T-cell (primary cell): ENCODE measurements at regions of chr10 and their contacts with region 1.

Region 1: DNA sequence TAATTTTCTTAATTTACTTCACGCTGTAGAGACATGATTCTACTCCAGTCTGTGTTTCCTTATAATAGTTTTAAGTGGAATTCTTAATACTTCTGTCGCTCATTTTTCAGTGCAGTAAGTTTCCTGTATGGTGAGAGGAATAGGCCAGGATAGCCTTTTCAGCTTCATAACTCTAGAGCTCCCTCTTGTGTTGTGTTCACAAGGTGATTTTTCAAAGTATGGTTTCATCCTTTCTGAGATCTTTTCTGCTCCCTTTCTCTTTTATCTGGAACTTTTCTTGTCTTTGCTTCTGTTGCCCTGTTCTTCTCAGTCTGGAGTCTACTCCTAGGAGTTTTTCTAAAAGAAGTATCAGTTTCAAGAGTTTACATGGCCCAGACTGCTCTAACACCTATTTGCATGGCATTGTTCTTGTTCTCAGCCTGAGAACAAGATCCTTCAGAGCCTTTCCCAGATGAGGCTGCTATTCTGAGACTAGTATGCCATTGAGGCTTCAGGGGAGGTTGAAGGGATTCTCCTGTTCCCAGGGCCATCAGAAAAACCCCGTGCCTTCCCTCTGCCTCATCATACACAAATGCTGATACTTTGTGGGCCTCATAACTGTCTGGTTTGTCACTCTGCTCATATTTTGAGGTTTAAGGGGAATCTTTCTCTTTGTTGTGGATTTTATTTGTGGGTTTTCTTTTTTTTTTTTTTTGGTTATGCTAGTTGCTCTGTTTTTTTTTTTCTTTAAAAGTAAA is 21.8 kb downstream of the NET1 start:
- DNase-seq: peak in 3 of 35 experiments; percentile 1 to 62 (median 11)
- ATAC-seq: peak; percentile 61 to 77 (median 68)
- H3K4me3 ChIP-seq: no peak overlapping the region
- H3K4me3 Mint-ChIP-seq: peak overlapping the region in 1 of 3 donors; percentile 40
- H3K27ac ChIP-seq: no peak overlapping the region
- H3K27ac Mint-ChIP-seq: no peak overlapping the region
- H3K4me1 ChIP-seq: peaks cover 3 to 7% of the 10 kb centered on the region in 2 experiments
- H3K4me1 Mint-ChIP-seq: peaks cover 8 to 12% (median 9%) of the 10 kb centered on the region in 3 donors
- H3K27me3 ChIP-seq: no peaks in the 10 kb centered on the region
- H3K27me3 Mint-ChIP-seq: no peaks in the 10 kb centered on the region

Region 2: DNA sequence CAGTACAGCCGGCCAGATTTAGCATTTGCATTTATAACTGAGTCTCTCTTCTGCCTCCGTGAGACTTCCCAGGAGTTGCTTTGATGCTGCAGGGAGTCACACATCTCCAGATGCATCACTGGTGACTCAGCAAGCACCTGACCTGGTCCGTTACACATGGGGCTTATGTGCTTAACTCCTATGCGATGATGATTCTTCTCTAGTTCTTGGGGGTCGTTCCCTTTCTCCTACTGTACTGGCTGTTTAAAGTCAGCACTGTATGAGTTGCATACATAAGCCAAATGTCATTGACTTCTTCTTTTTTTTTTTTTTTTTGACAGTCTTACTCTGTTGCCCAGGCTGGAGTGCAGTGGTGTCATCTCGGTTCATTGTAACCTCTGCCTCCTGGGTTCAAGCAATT is 621.2 kb before region 1 on chr10:
- CTCF ChIA-PET with region 1: interaction called, 3 to 13 read pairs
- POLR2A ChIA-PET with region 1: no interaction called
- DNase-seq: no peak
- ATAC-seq: no peak
- H3K4me3 ChIP-seq: no peak overlapping the region
- H3K4me3 Mint-ChIP-seq: no peak overlapping the region
- H3K27ac ChIP-seq: no peak overlapping the region
- H3K27ac Mint-ChIP-seq: no peak overlapping the region
- H3K4me1 ChIP-seq: peaks cover 0 to 4% of the 10 kb centered on the region in 2 experiments
- H3K4me1 Mint-ChIP-seq: no peaks in the 10 kb centered on the region
- H3K27me3 ChIP-seq: peaks cover 0 to 7% of the 10 kb centered on the region in 2 experiments
- H3K27me3 Mint-ChIP-seq: peaks cover 0 to 7% of the 10 kb centered on the region in 2 donors

Region 3: DNA sequence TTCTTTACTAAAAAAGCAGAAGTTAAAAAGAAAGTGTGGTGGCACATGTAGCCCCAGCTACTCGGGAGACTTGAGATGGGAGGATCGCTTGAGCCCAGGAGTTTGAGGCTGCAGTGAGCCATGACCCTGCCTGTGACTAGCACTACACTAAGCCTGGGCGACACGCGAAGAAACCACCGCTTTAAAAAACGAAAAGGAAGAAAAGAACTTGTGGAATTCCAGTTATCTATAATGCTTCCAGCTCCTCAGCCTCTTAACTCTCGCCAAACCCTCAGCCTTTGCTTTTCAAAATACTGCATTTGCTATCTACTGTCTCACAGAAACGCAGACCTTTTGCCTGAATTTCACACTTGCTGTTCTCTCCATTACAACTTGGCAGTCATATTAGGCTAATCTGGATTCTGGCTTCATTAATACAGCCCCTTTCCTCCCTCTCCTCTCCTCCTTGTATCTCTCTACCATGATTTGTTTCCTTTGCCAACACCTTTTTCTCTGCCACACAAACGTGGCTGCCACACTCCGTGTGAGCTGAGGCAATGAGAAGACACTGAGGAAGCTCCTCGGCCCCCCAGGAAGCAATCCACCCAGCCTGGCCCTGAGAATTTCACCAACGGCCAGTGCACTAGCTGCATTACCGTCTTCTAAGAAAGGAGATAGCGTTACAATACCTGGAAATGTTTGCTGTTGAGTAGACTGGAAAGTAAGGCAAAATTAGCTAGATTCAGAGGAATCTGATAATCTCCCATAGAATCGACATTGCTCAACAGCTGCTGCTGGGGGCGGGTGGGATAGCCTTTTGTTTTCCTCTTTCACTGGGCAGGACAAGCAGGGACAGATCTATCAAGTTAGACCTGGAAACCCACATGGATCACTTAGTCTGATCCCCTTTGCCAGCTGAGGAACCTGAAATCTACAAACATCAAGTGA is 28.0 kb after region 1 on chr10:
- CTCF ChIA-PET with region 1: no interaction called
- POLR2A ChIA-PET with region 1: no interaction called
- DNase-seq: no peak
- ATAC-seq: no peak
- H3K4me3 ChIP-seq: no peak overlapping the region
- H3K4me3 Mint-ChIP-seq: no peak overlapping the region
- H3K27ac ChIP-seq: no peak overlapping the region
- H3K27ac Mint-ChIP-seq: no peak overlapping the region
- H3K4me1 ChIP-seq: peaks cover 0 to 13% of the 10 kb centered on the region in 2 experiments
- H3K4me1 Mint-ChIP-seq: peaks cover 9 to 23% (median 12%) of the 10 kb centered on the region in 3 donors
- H3K27me3 ChIP-seq: no peaks in the 10 kb centered on the region
- H3K27me3 Mint-ChIP-seq: peaks cover 0 to 4% of the 10 kb centered on the region in 2 donors

Region 4: GRCh38 chr10:5623081-5623748 is 189.0 kb after region 1 on chr10:
- CTCF ChIA-PET with region 1: interaction called, 10 to 35 read pairs
- POLR2A ChIA-PET with region 1: no interaction called
- DNase-seq: peak; percentile 43 to 84 (median 70)
- ATAC-seq: peak; percentile 96 to 99 (median 97)
- H3K4me3 ChIP-seq: no peak overlapping the region
- H3K4me3 Mint-ChIP-seq: no peak overlapping the region
- H3K27ac ChIP-seq: no peak overlapping the region
- H3K27ac Mint-ChIP-seq: no peak overlapping the region
- H3K4me1 ChIP-seq: peaks cover 0 to 6% of the 10 kb centered on the region in 2 experiments
- H3K4me1 Mint-ChIP-seq: peaks cover 0 to 7% (median 0%) of the 10 kb centered on the region in 3 donors
- H3K27me3 ChIP-seq: peaks cover 0 to 15% of the 10 kb centered on the region in 2 experiments
- H3K27me3 Mint-ChIP-seq: peaks cover 0 to 5% of the 10 kb centered on the region in 2 donors